Activated T-helper 1 cell treated with anti-CD3 and anti-CD28 coated beads, Interleukin-12 subunit alpha, Interleukin-12 subunit beta, Interleukin-2, Interleukin-4 antibody, amounts not matched to agents 30 ng/mL and 10 ng/mL and 1 ng/mL, durations not matched to agents 14 hours and 24 hours and 36 hours (primary cell): ENCODE measurements at regions of chr12 and their contacts with region 1.

Region 1: DNA sequence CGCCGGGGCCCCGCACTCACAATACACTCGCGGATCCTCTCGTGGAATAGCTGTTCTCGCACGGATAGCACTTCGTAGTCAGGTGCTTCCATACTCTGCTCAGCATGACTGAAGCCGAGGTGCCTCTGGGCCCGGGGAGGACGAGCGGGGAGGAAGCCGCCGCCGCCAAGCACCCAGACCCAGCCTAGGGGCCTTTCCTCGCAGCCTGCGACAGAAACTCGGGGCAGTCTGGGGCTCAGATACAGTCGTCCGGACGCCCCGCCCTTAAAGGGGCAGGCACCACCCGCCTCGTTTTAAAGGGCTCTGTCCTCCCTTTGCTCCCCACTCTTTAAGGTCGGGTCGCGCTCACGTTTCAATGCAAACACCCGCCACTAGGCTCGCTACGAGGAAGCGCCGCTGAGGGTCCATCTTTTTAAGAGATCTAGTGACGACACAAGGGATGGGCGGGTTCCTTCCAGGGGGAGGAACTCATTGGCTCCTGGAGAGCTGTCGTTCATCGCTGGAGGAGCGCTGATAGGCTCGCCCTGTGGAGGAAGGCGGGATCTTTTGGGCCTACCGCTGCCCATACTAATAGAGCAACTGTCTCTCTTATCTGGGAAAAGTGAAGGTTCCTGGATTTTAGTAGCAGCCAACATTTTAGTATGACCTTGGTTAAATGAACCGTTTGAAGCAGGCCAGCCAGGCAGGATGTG is at the start of gene LMBR1L:
- DNase-seq: peak; percentile 93
- H3K4me3 Mint-ChIP-seq: peak within 1 kb of the TSS; percentile 93
- H3K27ac Mint-ChIP-seq: peak within 1 kb of the TSS; percentile 92
- H3K4me1 Mint-ChIP-seq: peaks cover 37% of the 10 kb centered on the region
- H3K27me3 Mint-ChIP-seq: no peaks in the 10 kb centered on the region
- total RNA-seq, gene LMBR1L: 50.4 and 52.5 TPM in 2 replicates

Region 2: DNA sequence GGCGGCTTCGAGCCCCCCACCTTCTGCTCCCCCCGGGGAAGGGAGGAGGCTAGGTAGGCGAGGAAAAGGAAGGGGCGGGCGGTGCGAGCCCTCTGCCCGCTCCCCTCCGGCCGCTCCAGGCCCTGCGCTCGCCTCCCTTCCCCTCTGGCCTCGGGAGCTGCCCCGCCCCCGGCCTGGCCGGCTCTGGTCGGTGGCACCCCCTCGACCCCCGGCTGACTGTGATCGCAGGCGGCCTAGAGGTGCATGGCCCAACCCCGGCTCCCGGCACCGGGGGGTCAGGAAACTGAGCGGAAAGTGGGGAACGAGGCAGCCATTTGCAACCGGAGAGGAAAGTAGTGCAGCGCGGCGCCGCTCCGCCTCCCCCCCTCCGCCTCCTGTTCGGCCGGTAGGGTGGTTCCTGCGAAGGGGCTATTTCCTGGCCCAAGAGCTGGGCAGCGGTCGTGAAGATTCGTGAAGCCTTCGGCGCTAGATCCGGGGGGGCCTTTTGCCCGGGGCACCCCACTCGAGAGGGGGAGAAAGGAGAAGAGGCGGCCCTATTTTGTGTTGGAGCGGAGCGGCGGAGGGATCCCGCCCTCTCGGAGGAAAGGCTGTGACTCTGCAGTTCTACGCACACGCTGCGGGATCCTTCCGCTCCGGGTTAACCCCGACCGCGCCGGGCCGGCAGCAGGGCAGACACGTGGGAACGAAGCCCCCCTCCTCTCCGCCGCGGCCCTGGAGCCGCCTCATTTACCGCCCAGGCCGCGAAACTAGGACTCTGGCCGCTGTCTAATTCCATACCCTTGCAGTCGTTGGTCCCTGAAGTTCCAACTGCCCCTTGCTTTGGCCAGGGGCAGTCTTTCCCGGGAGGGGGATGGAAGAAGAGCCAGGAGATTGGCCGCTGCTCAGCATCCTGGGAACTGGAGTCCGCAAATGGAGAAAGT is 50.1 kb before region 1 on chr12 and contains the start of gene KMT2D:
- intact Hi-C with region 1: loop called (anchors 1 kb)
- DNase-seq: peak; percentile 83
- H3K4me3 Mint-ChIP-seq: peak within 1 kb of the TSS; percentile 95
- H3K27ac Mint-ChIP-seq: peak within 1 kb of the TSS; percentile 95
- H3K4me1 Mint-ChIP-seq: peaks cover 48% of the 10 kb centered on the region
- H3K27me3 Mint-ChIP-seq: no peaks in the 10 kb centered on the region
- total RNA-seq, gene KMT2D: 107 and 109 TPM in 2 replicates

Region 3: GRCh38 chr12:49069507-49070346 is 40.9 kb before region 1 on chr12 and contains the start of gene RHEBL1:
- intact Hi-C with region 1: loop called (anchors 1 kb)
- DNase-seq: peak; percentile 100
- H3K4me3 Mint-ChIP-seq: peak within 1 kb of the TSS; percentile 100
- H3K27ac Mint-ChIP-seq: peak within 1 kb of the TSS; percentile 97
- H3K4me1 Mint-ChIP-seq: peaks cover 26% of the 10 kb centered on the region
- H3K27me3 Mint-ChIP-seq: no peaks in the 10 kb centered on the region
- total RNA-seq, gene RHEBL1: 8.6 and 10.7 TPM in 2 replicates

Region 4: DNA sequence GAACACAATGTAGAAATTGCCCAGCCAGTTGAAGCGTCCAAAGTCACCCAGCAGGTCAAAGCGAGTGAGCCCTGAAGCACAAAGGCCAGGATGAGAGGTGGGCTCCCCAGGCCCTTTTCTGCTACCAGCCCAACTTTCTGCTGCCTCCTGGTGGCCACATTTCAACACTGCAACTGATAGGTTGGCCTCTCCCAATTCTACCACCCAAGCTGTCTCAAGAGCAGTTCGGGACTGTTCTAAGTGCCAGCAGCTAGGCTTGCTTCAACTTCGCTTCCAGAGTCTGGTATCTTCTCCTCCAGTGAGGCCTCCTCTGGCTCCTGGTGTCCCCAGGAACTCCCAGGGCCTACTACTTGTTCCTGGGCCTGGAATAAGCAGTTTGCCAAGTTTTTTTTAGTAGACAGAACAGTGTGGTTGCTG is 12.6 kb before region 1 on chr12:
- intact Hi-C with region 1: loop called (anchors 1 kb)
- DNase-seq: peak; percentile 43
- H3K4me3 Mint-ChIP-seq: no peak overlapping the region
- H3K27ac Mint-ChIP-seq: no peak overlapping the region
- H3K4me1 Mint-ChIP-seq: peaks cover 18% of the 10 kb centered on the region
- H3K27me3 Mint-ChIP-seq: peaks cover 20% of the 10 kb centered on the region

Region 5: GRCh38 chr12:49730050-49730449 is 619.4 kb after region 1 on chr12:
- intact Hi-C with region 1: no loop called
- DNase-seq: no peak
- H3K4me3 Mint-ChIP-seq: no peak overlapping the region
- H3K27ac Mint-ChIP-seq: no peak overlapping the region
- H3K4me1 Mint-ChIP-seq: peaks cover 3% of the 10 kb centered on the region
- H3K27me3 Mint-ChIP-seq: peaks cover 15% of the 10 kb centered on the region